Sigmoid colon (tissue), 7 donors: ENCODE measurements at regions of chr3 and their contacts with region 1.

Region 1: DNA sequence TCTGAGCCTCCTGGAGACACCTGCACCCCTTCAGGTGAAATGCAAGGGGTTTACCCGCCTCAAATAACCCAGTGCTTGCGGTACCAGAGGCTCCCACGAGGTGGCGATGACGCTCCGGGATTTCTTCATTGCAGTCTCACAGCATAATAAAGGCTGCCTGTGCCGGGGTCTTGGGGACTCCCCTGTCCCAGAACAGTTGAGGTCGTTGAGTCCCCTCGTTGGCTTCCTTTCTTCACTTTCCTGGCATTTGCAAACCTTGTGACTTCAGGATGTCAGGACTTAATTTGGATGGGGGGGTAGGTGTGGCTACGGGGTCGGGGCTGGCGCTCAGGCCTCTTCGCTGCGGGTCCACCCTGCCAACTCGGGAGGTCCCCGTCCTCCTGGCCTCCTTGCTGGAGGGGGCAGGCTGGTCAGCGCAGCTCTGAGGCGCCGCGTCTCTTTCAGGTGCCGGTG is 1.3 kb downstream of the GNAT1 start:
- DNase-seq: no peak
- H3K4me3 ChIP-seq: no peak overlapping the region
- H3K27ac ChIP-seq: no peak overlapping the region
- H3K4me1 ChIP-seq: peaks cover 0 to 28% (median 25%) of the 10 kb centered on the region in 4 donors
- H3K27me3 ChIP-seq: peaks cover 22 to 50% (median 33%) of the 10 kb centered on the region in 3 donors
- CTCF ChIP-seq: peak; percentile 80 to 94 (median 90)
- EP300 ChIP-seq: no peak
- POLR2A ChIP-seq: no peak

Region 2: DNA sequence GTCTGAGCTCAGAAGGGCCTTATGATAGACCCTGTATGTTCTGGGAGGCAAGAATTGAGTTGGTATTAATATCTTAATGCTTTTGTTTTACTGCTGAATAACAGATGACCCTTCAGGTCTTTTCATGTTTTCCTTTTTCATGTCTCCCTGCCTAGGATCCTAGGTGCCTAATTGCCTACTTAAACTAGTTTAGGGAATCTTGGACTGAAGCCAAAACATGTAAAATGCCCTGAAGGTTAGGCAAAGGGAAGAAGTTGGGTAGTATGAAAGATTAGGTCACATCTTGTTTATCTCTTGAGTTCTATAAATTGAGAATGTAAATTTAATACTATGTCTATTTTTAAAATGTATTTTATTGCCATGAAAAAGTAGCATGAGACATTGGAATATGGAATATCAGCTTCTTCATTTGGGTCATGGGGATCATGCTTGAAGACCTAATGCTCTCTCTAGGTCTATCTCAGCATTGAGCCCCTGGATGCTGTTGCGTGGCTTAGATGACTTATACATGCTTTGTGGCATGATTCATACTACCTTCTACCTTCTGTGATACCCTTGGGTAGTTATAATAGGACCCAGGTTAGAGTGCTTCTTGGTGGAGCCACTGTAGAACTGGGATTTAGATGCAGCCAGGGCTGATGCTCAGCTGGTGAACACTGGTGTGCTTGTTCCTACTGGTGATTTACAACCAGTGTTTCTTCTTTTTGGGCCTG is 226.3 kb before region 1 on chr3:
- intact Hi-C with region 1: no loop called
- DNase-seq: no peak
- H3K4me3 ChIP-seq: no peak overlapping the region
- H3K27ac ChIP-seq: peak overlapping the region in 2 of 4 donors; percentile 33 to 38
- H3K4me1 ChIP-seq: peaks cover 0 to 27% (median 22%) of the 10 kb centered on the region in 4 donors
- H3K27me3 ChIP-seq: no peaks in the 10 kb centered on the region
- CTCF ChIP-seq: no peak
- EP300 ChIP-seq: no peak
- POLR2A ChIP-seq: no peak

Region 3: DNA sequence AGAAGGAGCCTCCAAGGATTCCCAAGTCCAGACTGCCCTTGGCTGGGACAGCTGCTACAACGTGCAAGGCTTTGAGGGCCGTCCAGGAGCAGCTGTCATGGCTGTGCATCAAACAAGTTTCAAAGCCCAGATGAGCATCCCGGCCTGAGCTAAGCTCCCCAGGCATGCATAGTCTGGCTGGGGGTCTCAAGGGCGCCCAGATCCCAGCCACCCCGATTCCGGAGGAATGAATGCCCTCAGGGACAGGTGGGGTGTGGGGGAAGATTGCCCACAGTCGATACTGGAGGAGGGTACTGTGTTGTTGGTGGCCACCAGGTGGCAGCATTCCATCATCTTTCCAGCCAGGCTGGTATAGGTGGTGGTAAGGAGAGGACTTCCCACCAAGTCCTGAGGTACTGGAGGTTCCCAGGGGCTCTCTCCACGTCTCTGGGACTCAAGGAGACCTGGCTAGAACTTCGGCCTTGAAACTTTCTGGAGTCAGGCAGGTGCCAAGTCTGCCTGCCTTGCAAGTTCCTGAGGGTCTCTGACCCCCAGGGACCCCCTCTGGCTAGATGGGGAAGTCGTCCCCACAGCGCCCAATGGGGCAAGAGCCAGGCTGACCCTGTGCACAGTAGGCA is 71.2 kb before region 1 on chr3:
- intact Hi-C with region 1: loop called (anchors 1 kb)
- DNase-seq: peak; percentile 89
- H3K4me3 ChIP-seq: no peak overlapping the region
- H3K27ac ChIP-seq: no peak overlapping the region
- H3K4me1 ChIP-seq: peaks cover 0 to 36% (median 28%) of the 10 kb centered on the region in 4 donors
- H3K27me3 ChIP-seq: no peaks in the 10 kb centered on the region
- CTCF ChIP-seq: peak; percentile 65 to 90 (median 85)
- EP300 ChIP-seq: no peak
- POLR2A ChIP-seq: no peak

Region 4: DNA sequence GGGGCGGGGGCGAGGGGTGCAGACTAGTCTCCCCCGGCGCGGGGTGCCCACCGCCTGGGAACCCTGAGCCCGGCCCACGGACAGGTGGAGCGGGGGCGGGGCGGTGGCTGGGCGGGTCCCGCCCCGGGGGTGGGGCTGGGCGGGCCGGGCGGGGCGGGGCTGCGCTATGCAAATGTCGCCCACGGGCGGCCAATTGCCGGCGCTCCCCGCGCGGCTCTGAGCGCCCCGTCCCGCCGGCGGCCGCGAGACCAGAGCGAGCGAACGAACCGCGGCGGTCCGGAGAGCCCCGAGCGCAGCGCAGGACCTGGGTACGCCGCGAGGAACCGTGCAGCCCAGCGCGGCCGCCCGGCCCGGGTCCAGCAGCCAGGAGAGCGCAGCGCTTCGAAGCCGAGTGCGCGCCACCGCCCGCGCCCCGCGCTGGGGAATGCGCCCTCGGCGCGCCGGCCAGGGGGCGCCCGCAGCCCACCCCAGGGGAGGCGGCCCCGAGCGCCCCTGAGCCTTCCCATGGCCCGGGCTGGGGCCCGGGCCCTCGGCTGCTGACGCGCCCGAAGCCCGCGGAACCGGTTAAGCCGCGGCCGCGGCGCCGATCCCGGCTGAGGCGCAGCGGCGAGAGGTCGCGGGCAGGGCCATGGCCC is 37.8 kb before region 1 on chr3 and contains the start of gene SEMA3F:
- intact Hi-C with region 1: loop called (anchors 1 kb)
- DNase-seq: peak; percentile 74
- H3K4me3 ChIP-seq: peak within 1 kb of the TSS; percentile 23 to 65 (median 58)
- H3K27ac ChIP-seq: peak within 1 kb of the TSS; percentile 60 to 90 (median 86)
- H3K4me1 ChIP-seq: peaks cover 0 to 51% (median 48%) of the 10 kb centered on the region in 4 donors
- H3K27me3 ChIP-seq: peaks cover 0 to 7% (median 4%) of the 10 kb centered on the region in 3 donors
- CTCF ChIP-seq: no peak
- EP300 ChIP-seq: no peak
- POLR2A ChIP-seq: no peak
- total RNA-seq, gene SEMA3F: 5.1 to 11.4 (median 8.0) TPM

Region 5: GRCh38 chr3:50227390-50228183 is 34.9 kb after region 1 on chr3:
- intact Hi-C with region 1: loop called (anchors 1 kb)
- DNase-seq: peak; percentile 95
- H3K4me3 ChIP-seq: peak overlapping the region; percentile 55 to 73 (median 62)
- H3K27ac ChIP-seq: peak overlapping the region; percentile 70 to 77 (median 76)
- H3K4me1 ChIP-seq: peaks cover 0 to 28% (median 22%) of the 10 kb centered on the region in 4 donors
- H3K27me3 ChIP-seq: no peaks in the 10 kb centered on the region
- CTCF ChIP-seq: peak in 3 of 4 experiments; percentile 48 to 97 (median 60)
- EP300 ChIP-seq: no peak
- POLR2A ChIP-seq: peak; percentile 8 to 41

Region 6: DNA sequence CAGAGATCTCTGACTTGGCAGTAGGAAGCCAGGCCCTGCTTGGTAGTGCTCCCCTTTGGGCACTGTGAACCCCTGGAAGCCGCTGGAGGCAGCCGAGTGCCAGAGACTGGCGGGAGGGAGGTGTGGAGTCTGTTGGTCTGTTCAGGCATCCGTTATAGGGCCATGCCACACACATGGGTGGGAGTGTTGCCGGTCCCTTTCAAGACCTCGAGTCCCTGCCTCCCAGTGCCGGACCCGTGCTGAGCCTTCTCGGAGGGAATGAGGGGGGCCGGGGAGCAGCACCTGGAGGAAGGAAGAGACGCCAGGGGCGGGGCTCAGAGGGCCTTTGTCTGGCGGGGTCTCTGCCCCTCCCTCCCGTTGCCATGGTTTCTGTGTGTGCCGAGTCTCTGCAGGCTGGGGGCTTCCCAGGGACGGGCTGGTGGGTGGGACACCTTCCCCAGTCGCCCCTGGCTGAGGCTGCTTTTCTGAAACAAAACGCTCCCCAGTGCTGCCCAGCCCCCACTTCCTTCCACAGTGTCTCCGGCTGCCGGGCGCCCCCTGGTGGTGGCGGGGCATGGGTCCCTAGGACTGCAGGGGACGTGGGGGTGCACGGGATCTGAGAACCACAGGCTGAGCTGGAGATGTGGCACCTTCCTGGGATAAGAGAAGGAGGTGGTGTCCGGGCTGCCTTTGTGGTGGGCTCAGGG is 53.3 kb after region 1 on chr3:
- intact Hi-C with region 1: loop called (anchors 2 kb)
- DNase-seq: peak; percentile 95
- H3K4me3 ChIP-seq: peak overlapping the region; percentile 24 to 52 (median 44)
- H3K27ac ChIP-seq: peak overlapping the region; percentile 76 to 91 (median 85)
- H3K4me1 ChIP-seq: peaks cover 0 to 99% (median 89%) of the 10 kb centered on the region in 4 donors
- H3K27me3 ChIP-seq: no peaks in the 10 kb centered on the region
- CTCF ChIP-seq: peak; percentile 94 to 99 (median 98)
- EP300 ChIP-seq: no peak
- POLR2A ChIP-seq: no peak

Region 7: GRCh38 chr3:50272911-50273693 is 80.4 kb after region 1 on chr3:
- intact Hi-C with region 1: loop called (anchors 2 kb)
- DNase-seq: peak; percentile 92
- H3K4me3 ChIP-seq: peak overlapping the region in 3 of 4 donors; percentile 31 to 45 (median 35)
- H3K27ac ChIP-seq: peak overlapping the region in 3 of 4 donors; percentile 48 to 99 (median 65)
- H3K4me1 ChIP-seq: peaks cover 0 to 43% (median 36%) of the 10 kb centered on the region in 4 donors
- H3K27me3 ChIP-seq: peaks cover 0 to 21% (median 0%) of the 10 kb centered on the region in 3 donors
- CTCF ChIP-seq: peak; percentile 97 to 99 (median 99)
- EP300 ChIP-seq: no peak
- POLR2A ChIP-seq: no peak

Region 8: GRCh38 chr3:50321336-50322114 is 128.8 kb after region 1 on chr3:
- intact Hi-C with region 1: loop called (anchors 5 kb)
- DNase-seq: peak; percentile 95
- H3K4me3 ChIP-seq: peak overlapping the region; percentile 58 to 84 (median 75)
- H3K27ac ChIP-seq: peak overlapping the region; percentile 88 to 92 (median 92)
- H3K4me1 ChIP-seq: peaks cover 0 to 70% (median 59%) of the 10 kb centered on the region in 4 donors
- H3K27me3 ChIP-seq: no peaks in the 10 kb centered on the region
- CTCF ChIP-seq: peak; percentile 22 to 50 (median 42)
- EP300 ChIP-seq: no peak
- POLR2A ChIP-seq: no peak